Calu3 (cell line): ENCODE measurements at regions of chr22 and their contacts with region 1.

Region 1: DNA sequence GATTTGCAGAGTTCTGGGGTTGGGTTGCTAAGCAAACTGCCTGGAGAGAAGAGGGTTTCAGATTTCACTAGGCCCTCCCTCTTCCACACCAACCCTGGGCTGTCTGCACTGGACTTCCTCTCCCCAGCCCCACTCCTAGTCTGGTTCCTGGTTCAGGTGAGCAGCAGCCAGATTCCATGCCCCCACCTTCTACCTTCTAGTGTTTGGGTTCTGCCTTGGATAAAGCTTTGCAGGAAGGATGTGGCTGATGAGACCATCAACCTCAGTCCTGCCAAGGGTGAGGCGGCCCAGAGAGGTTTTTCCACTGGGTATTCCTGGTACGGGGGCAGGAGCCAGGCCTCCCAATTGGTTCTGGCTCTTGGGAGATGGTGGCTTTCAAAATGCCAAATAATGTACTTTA is 68.3 kb downstream of the BCR start:
- DNase-seq: peak; percentile 69
- H3K4me3 Mint-ChIP-seq: no peak overlapping the region
- H3K27ac Mint-ChIP-seq: no peak overlapping the region
- H3K4me1 Mint-ChIP-seq: peaks cover 65% of the 10 kb centered on the region
- H3K27me3 Mint-ChIP-seq: no peaks in the 10 kb centered on the region
- CTCF ChIP-seq: no peak

Region 2: DNA sequence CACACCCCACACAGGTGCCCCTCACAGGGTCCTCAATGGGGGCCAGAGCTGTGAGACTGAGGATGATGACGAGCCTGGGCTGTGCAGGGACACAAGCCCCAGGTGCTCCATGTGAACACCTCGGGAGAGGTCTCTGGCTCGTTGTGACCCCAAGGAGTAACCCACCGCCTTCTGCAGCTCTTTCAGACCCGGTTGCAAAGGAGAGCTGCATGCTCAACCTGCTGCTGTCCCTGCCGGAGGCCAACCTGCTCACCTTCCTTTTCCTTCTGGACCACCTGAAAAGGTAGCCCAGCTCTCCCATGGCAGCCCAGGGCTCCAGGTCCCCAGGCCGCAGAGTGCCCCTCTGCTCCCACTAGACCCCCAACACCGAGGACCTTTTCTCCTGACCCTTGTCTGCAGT is 65.2 kb after region 1 on chr22:
- CTCF ChIA-PET with region 1: interaction called, 12 read pairs
- intact Hi-C with region 1: no loop called
- DNase-seq: no peak
- H3K4me3 Mint-ChIP-seq: no peak overlapping the region
- H3K27ac Mint-ChIP-seq: no peak overlapping the region
- H3K4me1 Mint-ChIP-seq: no peaks in the 10 kb centered on the region
- H3K27me3 Mint-ChIP-seq: no peaks in the 10 kb centered on the region
- CTCF ChIP-seq: no peak

Region 3: DNA sequence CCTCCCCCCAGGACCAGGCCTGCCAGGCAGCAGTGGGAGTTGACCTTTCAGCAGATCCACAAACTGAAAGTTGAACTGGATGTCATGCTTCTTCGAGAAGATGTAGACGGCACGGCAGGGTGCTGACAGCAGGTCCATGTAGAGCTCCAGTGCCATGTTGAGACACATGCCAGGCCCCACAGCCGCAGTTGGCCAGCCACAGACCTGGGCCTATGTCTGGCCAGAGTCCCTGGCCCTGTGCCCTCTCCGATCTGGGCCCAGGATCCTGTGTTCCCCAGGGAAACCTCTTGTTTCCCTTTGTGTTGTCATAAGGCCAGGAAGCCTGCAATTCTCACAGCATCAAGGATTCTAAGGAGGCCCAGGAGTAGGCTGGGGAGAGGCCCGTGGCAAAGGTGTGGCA is 756.6 kb after region 1 on chr22 and contains the start of gene GSTT4:
- CTCF ChIA-PET with region 1: no interaction called
- intact Hi-C with region 1: no loop called
- DNase-seq: no peak
- H3K4me3 Mint-ChIP-seq: no peak within 1 kb of the TSS
- H3K27ac Mint-ChIP-seq: no peak within 1 kb of the TSS
- H3K4me1 Mint-ChIP-seq: no peaks in the 10 kb centered on the region
- H3K27me3 Mint-ChIP-seq: no peaks in the 10 kb centered on the region
- CTCF ChIP-seq: no peak
- total RNA-seq, gene GSTT4: not detected in 2 replicates